Pancreas (tissue), 10 donors: ENCODE measurements at regions of chr17 and their contacts with region 1.

Region 1: GRCh38 chr17:40168262-40168832 is 8.9 kb upstream of the RAPGEFL1 start:
- DNase-seq: peak in 3 of 6 donors; percentile 28 to 51 (median 31)
- ATAC-seq: peak; percentile 79 to 97 (median 92)
- H3K4me3 ChIP-seq: no peak overlapping the region
- H3K27ac ChIP-seq: peak overlapping the region in 1 of 4 donors; percentile 0
- H3K4me1 ChIP-seq: no peaks in the 10 kb centered on the region
- H3K27me3 ChIP-seq: no peaks in the 10 kb centered on the region
- CTCF ChIP-seq: peak; percentile 53 to 73 (median 62)

Region 2: DNA sequence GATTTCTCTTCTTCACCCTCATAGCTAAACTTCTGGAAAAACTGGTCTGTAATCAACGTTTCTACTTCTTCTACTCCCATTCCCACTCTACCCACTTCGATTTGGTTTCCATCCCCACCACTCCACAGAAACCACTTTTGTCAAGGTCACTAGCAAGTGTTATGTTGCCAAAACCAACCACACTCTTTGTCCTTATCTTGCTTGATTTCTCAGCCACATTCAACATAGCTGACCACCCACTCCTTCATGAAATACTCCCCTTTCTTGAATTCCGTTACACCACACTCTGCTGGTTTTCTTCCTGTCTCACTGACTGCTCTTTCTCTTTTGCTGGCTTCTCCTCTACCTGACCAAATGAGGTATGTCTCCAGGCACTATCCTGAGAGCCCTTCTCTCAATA is 316.1 kb before region 1 on chr17:
- intact Hi-C with region 1: no loop called
- DNase-seq: no peak
- ATAC-seq: no peak
- H3K4me3 ChIP-seq: no peak overlapping the region
- H3K27ac ChIP-seq: no peak overlapping the region
- H3K4me1 ChIP-seq: no peaks in the 10 kb centered on the region
- H3K27me3 ChIP-seq: peaks cover 0 to 3% (median 0%) of the 10 kb centered on the region in 4 donors
- CTCF ChIP-seq: no peak

Region 3: DNA sequence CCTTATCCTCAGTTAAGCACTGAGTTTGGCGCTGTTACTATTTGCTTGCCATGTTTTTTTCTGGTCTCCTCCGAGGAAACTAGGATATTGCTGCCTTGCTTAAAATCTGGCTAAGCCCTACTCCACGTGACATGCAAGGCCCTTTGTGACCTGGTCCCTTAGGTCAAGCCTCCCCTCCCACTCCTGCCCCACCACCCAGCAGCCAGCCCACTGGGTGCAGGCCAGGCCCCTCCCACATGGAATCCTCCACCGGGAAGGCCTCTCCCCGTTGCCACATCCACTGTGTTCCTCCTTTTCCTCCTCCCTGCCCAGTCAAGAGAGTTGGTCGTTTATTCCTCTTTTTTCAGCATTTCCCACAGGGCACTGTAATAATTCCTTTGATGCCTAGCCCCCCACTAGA is 171.5 kb before region 1 on chr17:
- intact Hi-C with region 1: loop called in 1 of 3 experiments (anchors 10 kb)
- DNase-seq: no peak
- ATAC-seq: peak in 2 of 4 donors; percentile 28 to 58
- H3K4me3 ChIP-seq: no peak overlapping the region
- H3K27ac ChIP-seq: no peak overlapping the region
- H3K4me1 ChIP-seq: no peaks in the 10 kb centered on the region
- H3K27me3 ChIP-seq: no peaks in the 10 kb centered on the region
- CTCF ChIP-seq: no peak

Region 4: DNA sequence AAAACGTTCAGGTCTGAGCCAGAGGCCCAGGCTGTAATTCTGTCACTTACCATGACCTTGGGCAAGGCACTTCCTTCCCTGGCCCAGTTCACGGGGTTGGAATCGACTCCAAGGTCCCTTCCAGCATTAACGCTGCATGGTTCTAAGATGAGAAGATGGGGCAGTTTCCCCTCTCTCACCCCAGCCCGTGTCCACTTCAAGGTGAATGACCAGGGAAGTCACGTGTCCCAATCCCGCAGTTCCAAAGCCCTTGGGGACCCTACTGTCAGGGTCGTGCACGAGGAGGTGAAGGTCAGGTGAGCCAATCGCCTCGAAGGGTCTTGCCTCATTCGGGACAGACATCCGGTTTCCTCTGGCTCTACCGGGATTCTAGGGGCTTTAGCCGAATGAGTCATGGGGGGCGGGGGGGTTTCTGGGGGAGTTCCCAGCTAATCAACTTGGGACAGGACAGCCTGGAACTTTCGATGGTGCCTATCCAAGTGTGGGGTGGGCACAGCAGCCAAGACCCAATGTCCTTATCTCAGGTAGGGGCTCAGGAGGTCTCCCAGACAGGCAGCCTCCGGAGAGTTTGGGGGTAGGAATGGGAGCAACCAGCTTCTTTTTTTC is 153.9 kb before region 1 on chr17:
- intact Hi-C with region 1: loop called in 1 of 3 experiments (anchors 5 kb)
- DNase-seq: peak in 1 of 6 donors; percentile 51
- ATAC-seq: peak; percentile 43 to 68 (median 64)
- H3K4me3 ChIP-seq: peak overlapping the region in 1 of 4 donors; percentile 0
- H3K27ac ChIP-seq: peak overlapping the region in 1 of 4 donors; percentile 11
- H3K4me1 ChIP-seq: peaks cover 0 to 11% (median 11%) of the 10 kb centered on the region in 3 donors
- H3K27me3 ChIP-seq: no peaks in the 10 kb centered on the region
- CTCF ChIP-seq: no peak

Region 5: DNA sequence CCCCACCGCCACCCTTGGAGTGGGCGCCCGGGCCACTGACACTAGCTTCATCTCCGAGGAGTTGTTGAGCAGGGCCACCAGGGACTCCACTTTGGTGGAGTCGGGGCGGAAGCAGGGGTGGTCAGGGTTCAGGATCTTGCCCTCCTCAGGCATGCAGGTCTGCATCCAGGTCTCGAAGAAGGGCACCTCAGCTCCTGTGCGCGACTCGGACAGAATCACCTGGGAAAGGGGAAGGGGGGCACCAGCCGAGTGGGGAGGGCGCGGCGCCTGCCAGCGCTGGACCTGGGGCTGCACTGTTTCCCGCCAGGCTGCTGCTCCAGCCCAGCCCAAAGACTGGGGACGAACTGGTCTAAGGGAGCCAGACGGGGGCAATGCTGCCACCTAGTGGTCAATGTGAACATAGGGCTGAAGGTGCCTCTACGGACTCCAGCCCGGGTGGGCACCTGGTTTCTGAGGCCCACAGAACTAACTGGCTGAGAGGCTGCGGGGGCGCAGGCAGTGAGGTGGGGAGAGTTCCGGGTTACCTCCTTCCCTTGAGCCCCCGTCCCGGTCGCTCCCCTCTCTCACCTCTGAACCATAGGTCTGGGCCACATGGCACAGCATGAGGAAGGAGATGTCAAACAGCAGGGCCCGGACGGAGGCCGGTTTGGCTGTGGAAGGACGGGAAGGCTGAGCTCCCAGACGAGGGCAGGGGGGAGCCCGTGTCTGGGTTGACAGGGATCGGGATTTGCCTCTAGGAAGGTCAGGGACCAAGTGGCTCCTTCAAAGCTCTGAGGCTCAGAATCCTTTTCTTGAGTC is 141.3 kb before region 1 on chr17:
- intact Hi-C with region 1: loop called in 1 of 3 experiments (anchors 10 kb)
- DNase-seq: peak; percentile 70 to 92 (median 83)
- ATAC-seq: peak; percentile 76 to 89 (median 87)
- H3K4me3 ChIP-seq: no peak overlapping the region
- H3K27ac ChIP-seq: no peak overlapping the region
- H3K4me1 ChIP-seq: peaks cover 7 to 25% (median 15%) of the 10 kb centered on the region in 3 donors
- H3K27me3 ChIP-seq: no peaks in the 10 kb centered on the region
- CTCF ChIP-seq: peak; percentile 90 to 98 (median 94)

Region 6: GRCh38 chr17:40113110-40113906 is 55.0 kb before region 1 on chr17:
- intact Hi-C with region 1: loop called in 2 of 3 experiments (anchors 5 to 10 kb)
- DNase-seq: peak; percentile 89 to 96 (median 92)
- ATAC-seq: peak; percentile 73 to 83 (median 78)
- H3K4me3 ChIP-seq: peak overlapping the region in 2 of 4 donors; percentile 31 to 40
- H3K27ac ChIP-seq: peak overlapping the region; percentile 67 to 93 (median 88)
- H3K4me1 ChIP-seq: peaks cover 57 to 63% (median 60%) of the 10 kb centered on the region in 3 donors
- H3K27me3 ChIP-seq: no peaks in the 10 kb centered on the region
- CTCF ChIP-seq: peak; percentile 52 to 75 (median 69)